CD8-positive, alpha-beta T cell (primary cell): ENCODE measurements at regions of chr2 and their contacts with region 1.

Region 1: GRCh38 chr2:171210864-171211431 is 50.3 kb upstream of the TLK1 start:
- DNase-seq: peak in 8 of 9 experiments; percentile 16 to 65 (median 40)
- ATAC-seq: peak; percentile 93
- H3K4me3 ChIP-seq: peak overlapping the region; percentile 1 to 31
- H3K4me3 Mint-ChIP-seq: peak overlapping the region; percentile 65
- H3K27ac ChIP-seq: peak overlapping the region; percentile 13 to 67
- H3K27ac Mint-ChIP-seq: peak overlapping the region; percentile 75
- H3K4me1 ChIP-seq: peaks cover 13% of the 10 kb centered on the region
- H3K4me1 Mint-ChIP-seq: peaks cover 21% of the 10 kb centered on the region
- H3K27me3 ChIP-seq: no peaks in the 10 kb centered on the region
- H3K27me3 Mint-ChIP-seq: no peaks in the 10 kb centered on the region
- CTCF ChIP-seq: no peak

Region 2: DNA sequence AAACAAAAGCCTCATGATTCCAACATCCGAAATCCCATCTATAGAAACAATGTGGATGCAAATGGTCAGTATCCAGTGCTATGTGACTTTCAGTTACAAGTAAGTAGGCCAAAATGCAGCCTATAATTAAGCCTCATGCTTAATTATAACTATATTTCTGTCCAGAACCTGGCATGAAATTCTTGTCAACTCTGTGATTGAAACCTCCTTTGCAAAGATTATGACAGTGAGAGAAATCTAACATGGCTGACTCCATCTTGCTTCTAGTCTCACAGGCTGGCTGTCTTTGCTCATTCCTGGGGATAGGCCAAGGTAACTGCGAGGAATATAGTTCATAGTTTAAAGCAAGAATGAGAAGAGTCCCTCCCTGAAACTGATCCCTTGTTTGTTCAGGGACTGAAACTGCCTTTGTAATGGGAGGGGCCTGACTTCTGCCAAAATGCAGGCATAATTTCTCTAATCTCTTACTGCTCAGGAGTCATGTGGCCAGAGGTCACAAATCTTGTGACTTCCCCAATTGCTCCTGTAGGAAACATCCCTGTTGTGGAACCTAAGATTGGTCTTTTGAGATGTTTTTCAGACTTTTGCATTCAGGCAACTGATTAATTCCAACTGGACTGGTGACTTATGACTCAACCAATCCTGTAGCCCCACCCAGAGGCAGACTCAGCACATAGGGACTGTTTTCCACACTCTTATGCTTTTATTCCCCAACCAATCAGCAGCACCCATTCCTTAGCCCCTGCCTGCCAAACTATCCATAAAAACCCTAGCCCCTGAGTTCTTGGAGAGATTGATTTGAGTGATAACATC is 34.2 kb after region 1 on chr2:
- CTCF ChIA-PET with region 1: no interaction called
- POLR2A ChIA-PET with region 1: no interaction called
- intact Hi-C with region 1: loop called in 1 of 2 experiments (anchors 5 kb)
- DNase-seq: peak in 2 of 9 experiments; percentile 18 to 23
- ATAC-seq: no peak
- H3K4me3 ChIP-seq: no peak overlapping the region
- H3K4me3 Mint-ChIP-seq: no peak overlapping the region
- H3K27ac ChIP-seq: no peak overlapping the region
- H3K27ac Mint-ChIP-seq: no peak overlapping the region
- H3K4me1 ChIP-seq: peaks cover 26% of the 10 kb centered on the region
- H3K4me1 Mint-ChIP-seq: peaks cover 35% of the 10 kb centered on the region
- H3K27me3 ChIP-seq: no peaks in the 10 kb centered on the region
- H3K27me3 Mint-ChIP-seq: no peaks in the 10 kb centered on the region
- CTCF ChIP-seq: no peak

Region 3: GRCh38 chr2:171587567-171587966 is 376.6 kb after region 1 on chr2:
- CTCF ChIA-PET with region 1: no interaction called
- POLR2A ChIA-PET with region 1: no interaction called
- intact Hi-C with region 1: no loop called
- DNase-seq: no peak
- ATAC-seq: no peak
- H3K4me3 ChIP-seq: no peak overlapping the region
- H3K4me3 Mint-ChIP-seq: no peak overlapping the region
- H3K27ac ChIP-seq: no peak overlapping the region
- H3K27ac Mint-ChIP-seq: no peak overlapping the region
- H3K4me1 ChIP-seq: no peaks in the 10 kb centered on the region
- H3K4me1 Mint-ChIP-seq: no peaks in the 10 kb centered on the region
- H3K27me3 ChIP-seq: peaks cover 0 to 6% of the 10 kb centered on the region in 2 experiments
- H3K27me3 Mint-ChIP-seq: peaks cover 3% of the 10 kb centered on the region
- CTCF ChIP-seq: no peak